Vagina (tissue), 2 donors: ENCODE measurements at regions of chr1 and their contacts with region 1.

Region 1: DNA sequence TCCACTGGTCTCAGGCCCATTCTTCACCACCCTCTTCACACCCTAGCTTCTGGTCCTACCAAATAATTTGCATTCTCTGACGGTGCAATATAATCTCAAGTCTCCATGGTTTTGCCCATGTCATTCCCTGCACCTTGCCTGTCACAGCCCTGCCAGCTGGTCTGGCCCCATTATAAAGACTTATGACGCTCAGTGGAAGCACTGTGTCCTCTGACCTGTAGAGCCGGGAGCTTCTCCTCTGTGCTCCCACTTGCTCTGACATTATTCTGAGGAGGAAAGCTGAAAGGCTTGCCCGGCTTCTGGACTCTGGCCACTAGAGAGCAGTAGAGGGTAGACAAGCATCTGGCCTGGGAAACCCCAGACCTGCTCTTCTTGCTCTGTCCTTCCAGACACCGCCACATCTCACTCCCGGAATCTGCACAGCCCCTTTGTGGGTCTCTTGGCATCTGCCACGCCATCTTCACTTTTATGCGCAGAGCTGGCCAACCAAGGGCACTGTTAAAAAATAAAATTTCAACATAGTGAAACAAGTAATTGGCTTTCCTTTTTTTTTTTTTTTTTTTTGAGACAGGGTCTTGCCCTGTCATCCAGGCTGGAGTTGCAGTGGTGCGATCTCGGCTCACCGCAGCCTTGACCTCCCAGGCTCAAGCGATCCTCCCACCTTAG is 44.4 kb downstream of the NENF start:
- DNase-seq: no peak
- H3K4me3 ChIP-seq: no peak overlapping the region
- H3K27ac ChIP-seq: no peak overlapping the region
- H3K4me1 ChIP-seq: peaks cover 6% of the 10 kb centered on the region
- H3K27me3 ChIP-seq: no peaks in the 10 kb centered on the region
- CTCF ChIP-seq: peak; percentile 75 to 87 (median 75)
- POLR2A ChIP-seq: no peak

Region 2: GRCh38 chr1:212608209-212608955 is 131.2 kb after region 1 on chr1 and contains the start of gene ATF3:
- intact Hi-C with region 1: loop called (anchors 10 kb)
- DNase-seq: peak; percentile 100
- H3K4me3 ChIP-seq: peak within 1 kb of the TSS; percentile 78 to 82
- H3K27ac ChIP-seq: peak within 1 kb of the TSS; percentile 99
- H3K4me1 ChIP-seq: peaks cover 44% of the 10 kb centered on the region
- H3K27me3 ChIP-seq: no peaks in the 10 kb centered on the region
- CTCF ChIP-seq: no peak
- POLR2A ChIP-seq: peak in 1 of 2 donors; percentile 99
- total RNA-seq, gene ATF3: 34.9 TPM

Region 3: DNA sequence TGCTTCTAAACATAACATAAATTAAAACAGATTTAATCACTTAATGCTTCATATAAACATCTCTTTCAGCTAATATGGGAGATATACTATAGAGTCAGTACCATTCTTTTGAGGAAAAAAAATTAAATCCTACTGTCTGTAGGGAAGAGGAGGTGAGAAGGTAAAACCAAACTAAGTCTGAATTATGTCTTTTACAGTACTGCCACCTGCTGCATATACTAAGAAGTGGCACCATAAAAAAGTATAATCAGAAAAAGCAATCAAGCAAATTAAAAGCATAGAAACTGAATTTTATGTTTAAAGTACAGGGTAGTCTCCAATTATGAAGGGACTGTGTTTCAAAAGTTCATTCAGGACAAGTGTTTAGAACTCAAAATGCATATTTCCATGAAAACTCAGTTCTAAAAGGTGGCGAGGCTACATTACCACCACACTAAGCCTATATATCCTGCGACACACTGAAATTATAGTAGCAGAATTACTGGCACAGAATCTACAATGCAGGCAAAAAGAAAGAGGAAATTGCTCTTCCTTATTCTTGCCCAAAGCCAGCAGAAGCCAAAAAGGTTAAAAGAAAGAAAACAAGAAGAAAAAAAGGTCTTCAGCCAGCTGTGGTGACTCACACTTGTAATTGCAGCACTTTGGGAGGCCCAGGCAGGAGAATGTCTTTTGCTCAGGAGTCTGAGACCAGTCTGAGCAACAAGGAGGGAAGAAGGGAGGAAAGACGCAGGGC is 305.4 kb after region 1 on chr1:
- intact Hi-C with region 1: loop called (anchors 10 kb)
- DNase-seq: no peak
- H3K4me3 ChIP-seq: no peak overlapping the region
- H3K27ac ChIP-seq: no peak overlapping the region
- H3K4me1 ChIP-seq: no peaks in the 10 kb centered on the region
- H3K27me3 ChIP-seq: no peaks in the 10 kb centered on the region
- CTCF ChIP-seq: peak in 2 of 3 experiments; percentile 19 to 55
- POLR2A ChIP-seq: no peak